Panc1 (cell line): ENCODE measurements at regions of chr1 and their contacts with region 1.

Region 1: GRCh38 chr1:155553349-155553748 is 9.3 kb downstream of the ASH1L start:
- DNase-seq: no peak
- ATAC-seq: no peak
- H3K4me3 ChIP-seq: no peak overlapping the region
- H3K27ac ChIP-seq: no peak overlapping the region
- H3K4me1 ChIP-seq: 0 out of 2 replicates have a peak, but pooled peaks cover 2% of the 10 kb centered on the region
- H3K27me3 ChIP-seq: no peaks in the 10 kb centered on the region
- CTCF ChIP-seq: no peak

Region 2: DNA sequence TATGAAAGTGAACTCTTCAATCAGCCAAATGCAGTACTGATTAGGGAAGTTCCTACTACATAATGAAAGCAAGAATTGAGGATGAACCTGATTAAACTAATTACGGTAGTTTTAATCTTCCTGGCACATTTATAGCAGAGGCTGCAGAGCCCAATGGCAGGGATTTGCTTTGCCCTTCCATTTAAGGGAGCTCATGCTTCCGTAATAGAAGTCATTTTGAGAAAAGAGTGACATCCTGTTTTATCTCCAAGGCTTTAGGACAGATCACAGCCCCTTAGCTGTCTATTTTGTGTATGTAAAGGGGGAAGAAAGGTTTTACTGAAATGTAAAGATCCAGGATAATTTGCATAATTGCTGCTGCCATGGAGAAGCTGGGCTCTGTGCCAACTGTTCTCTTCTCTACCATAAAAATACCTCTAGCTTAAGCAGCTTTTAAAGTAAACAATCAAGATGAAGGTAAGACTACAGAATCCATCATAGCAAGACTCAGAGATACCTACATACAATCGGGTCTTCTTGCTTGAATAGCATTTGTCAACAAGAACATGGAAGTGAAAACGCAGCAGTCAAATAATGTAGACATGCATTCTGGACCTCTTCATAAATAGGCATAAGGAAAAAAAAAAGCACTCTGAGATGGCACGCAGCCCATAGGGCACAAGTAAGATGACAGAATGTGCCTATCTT is 53.3 kb before region 1 on chr1:
- CTCF ChIA-PET with region 1: no interaction called
- POLR2A ChIA-PET with region 1: no interaction called
- in situ Hi-C with region 1: no loop called
- intact Hi-C with region 1: loop called (anchors 10 kb)
- DNase-seq: no peak
- ATAC-seq: 0 out of 2 replicates have a peak, but pooled peaks have one; percentile 27
- H3K4me3 ChIP-seq: no peak overlapping the region
- H3K27ac ChIP-seq: no peak overlapping the region
- H3K4me1 ChIP-seq: peaks cover 16% of the 10 kb centered on the region
- H3K27me3 ChIP-seq: no peaks in the 10 kb centered on the region
- CTCF ChIP-seq: no peak

Region 3: DNA sequence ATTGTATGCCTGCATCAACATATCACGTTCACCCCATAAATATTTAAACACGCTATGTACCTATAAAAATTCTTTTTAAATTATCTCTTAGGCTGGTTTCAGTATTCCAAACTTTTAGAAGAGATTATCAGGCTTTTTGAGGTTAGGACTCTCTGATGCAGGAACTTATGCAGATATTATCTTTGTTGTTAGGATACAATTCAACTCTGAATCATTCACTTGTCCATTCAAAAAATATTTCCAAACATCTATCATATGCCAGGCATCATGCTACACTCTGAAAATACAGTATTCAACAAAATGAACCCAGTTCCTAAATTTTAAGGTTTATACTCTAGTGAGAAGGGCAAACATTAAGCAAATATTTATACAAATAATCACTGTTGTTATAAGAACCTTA is 31.3 kb before region 1 on chr1:
- CTCF ChIA-PET with region 1: no interaction called
- POLR2A ChIA-PET with region 1: no interaction called
- in situ Hi-C with region 1: no loop called
- intact Hi-C with region 1: no loop called
- DNase-seq: no peak
- ATAC-seq: no peak
- H3K4me3 ChIP-seq: no peak overlapping the region
- H3K27ac ChIP-seq: no peak overlapping the region
- H3K4me1 ChIP-seq: no peaks in the 10 kb centered on the region
- H3K27me3 ChIP-seq: no peaks in the 10 kb centered on the region
- CTCF ChIP-seq: no peak

Region 4: GRCh38 chr1:155651861-155652661 is 98.7 kb after region 1 on chr1:
- CTCF ChIA-PET with region 1: no interaction called
- POLR2A ChIA-PET with region 1: no interaction called
- in situ Hi-C with region 1: no loop called
- intact Hi-C with region 1: no loop called
- DNase-seq: no peak
- ATAC-seq: peak; percentile 16; the same call in 1 of the 2 replicates
- H3K4me3 ChIP-seq: no peak overlapping the region
- H3K27ac ChIP-seq: peak overlapping the region; percentile 76
- H3K4me1 ChIP-seq: peaks cover 16% of the 10 kb centered on the region
- H3K27me3 ChIP-seq: no peaks in the 10 kb centered on the region
- CTCF ChIP-seq: no peak

Region 5: DNA sequence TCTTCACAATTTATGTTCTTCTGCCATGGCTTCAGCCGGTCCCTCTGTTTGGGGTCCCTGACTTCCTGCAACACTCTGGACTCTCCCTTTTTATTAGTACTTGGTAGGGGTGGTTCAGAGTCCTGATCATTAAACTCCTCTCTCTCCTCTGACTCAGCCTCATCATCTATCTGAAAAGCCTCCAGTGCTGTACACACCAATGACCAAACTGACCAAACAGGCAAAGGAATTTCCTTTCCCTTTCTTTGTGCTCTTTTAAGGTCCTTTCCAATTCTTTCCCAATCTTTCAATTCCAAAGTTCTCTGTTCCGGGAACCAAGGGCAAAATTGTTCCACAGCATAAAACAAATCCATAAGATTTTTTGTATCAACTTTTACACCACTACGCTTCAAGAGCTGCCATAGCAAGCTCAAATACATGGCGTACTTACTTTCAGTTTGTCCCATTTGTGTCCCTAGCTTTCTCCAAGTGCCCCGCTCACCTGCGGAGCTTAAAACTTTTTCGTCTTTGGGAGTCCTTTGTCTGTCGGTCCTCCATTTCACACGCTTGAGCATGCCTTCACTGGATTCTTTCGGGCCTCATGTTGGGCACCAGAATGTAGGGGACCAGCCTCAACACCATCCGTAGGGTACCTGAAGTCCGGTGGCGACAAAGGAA is 145.2 kb after region 1 on chr1:
- CTCF ChIA-PET with region 1: no interaction called
- POLR2A ChIA-PET with region 1: no interaction called
- in situ Hi-C with region 1: no loop called
- intact Hi-C with region 1: no loop called
- DNase-seq: no peak
- ATAC-seq: peak; percentile 60; the same call in 1 of the 2 replicates
- H3K4me3 ChIP-seq: no peak overlapping the region
- H3K27ac ChIP-seq: no peak overlapping the region
- H3K4me1 ChIP-seq: peaks cover 6% of the 10 kb centered on the region
- H3K27me3 ChIP-seq: no peaks in the 10 kb centered on the region
- CTCF ChIP-seq: no peak

Region 6: GRCh38 chr1:155760751-155761475 is 207.6 kb after region 1 on chr1:
- CTCF ChIA-PET with region 1: interaction called, 11 read pairs
- POLR2A ChIA-PET with region 1: no interaction called
- in situ Hi-C with region 1: no loop called
- intact Hi-C with region 1: no loop called
- DNase-seq: no peak
- ATAC-seq: no peak
- H3K4me3 ChIP-seq: no peak overlapping the region
- H3K27ac ChIP-seq: no peak overlapping the region
- H3K4me1 ChIP-seq: no peaks in the 10 kb centered on the region
- H3K27me3 ChIP-seq: no peaks in the 10 kb centered on the region
- CTCF ChIP-seq: no peak